B cell (primary cell): ENCODE measurements at regions of chr9 and their contacts with region 1.

Region 1: GRCh38 chr9:111975709-111976108 is 79.1 kb downstream of the UGCG start:
- DNase-seq: peak; percentile 42
- ATAC-seq: peak; percentile 60
- H3K4me3 ChIP-seq: no peak overlapping the region
- H3K4me3 Mint-ChIP-seq: no peak overlapping the region
- H3K27ac ChIP-seq: no peak overlapping the region
- H3K27ac Mint-ChIP-seq: no peak overlapping the region
- H3K4me1 ChIP-seq: peaks cover 15% of the 10 kb centered on the region in 2 donors
- H3K4me1 Mint-ChIP-seq: peaks cover 25% of the 10 kb centered on the region
- H3K27me3 ChIP-seq: no peaks in the 10 kb centered on the region
- H3K27me3 Mint-ChIP-seq: no peaks in the 10 kb centered on the region
- CTCF ChIP-seq: no peak

Region 2: DNA sequence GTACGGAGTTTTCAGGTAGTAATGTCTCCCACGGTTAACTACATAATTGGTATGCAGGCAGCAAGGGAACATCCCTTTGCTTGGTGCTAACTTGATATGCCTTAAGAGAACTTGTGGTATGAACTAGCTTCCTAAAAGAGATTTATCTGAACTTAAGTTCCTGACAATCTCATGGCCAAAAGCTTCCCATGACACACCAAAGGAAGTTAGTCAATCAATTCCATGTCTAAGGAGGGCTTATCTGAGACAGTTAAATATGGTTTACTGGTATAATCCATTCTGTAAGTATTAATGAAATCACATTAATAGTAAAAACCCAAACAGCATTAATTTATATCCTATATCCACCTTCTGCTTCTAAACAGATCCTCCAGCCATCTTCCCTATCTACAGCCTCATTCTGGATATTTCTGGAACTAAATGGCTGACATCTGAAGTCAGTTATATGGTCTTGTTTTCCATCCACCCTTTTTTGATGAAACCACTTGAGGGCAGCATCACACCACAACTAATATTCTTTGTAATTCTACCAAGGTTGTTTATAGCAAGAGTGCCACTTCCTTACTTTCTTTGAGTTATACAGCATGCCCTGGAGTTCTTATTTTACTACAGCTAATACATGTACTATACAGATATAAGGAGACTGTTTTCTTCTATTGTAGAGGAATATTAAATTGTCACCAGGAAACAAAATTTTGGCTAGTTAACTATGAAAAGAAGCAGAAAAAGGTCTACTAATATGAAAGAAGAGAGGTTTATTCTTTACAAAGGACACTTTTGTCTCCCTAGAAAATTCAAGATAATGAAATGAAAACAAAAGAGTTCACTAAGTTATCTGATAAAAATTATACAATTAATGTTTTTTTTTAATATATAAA is 215.7 kb before region 1 on chr9:
- CTCF ChIA-PET with region 1: interaction called, 17 read pairs
- POLR2A ChIA-PET with region 1: no interaction called
- intact Hi-C with region 1: loop called (anchors 5 kb)
- DNase-seq: peak; percentile 82
- ATAC-seq: peak; percentile 82
- H3K4me3 ChIP-seq: no peak overlapping the region
- H3K4me3 Mint-ChIP-seq: no peak overlapping the region
- H3K27ac ChIP-seq: no peak overlapping the region
- H3K27ac Mint-ChIP-seq: no peak overlapping the region
- H3K4me1 ChIP-seq: peaks cover 0 to 3% of the 10 kb centered on the region in 2 donors
- H3K4me1 Mint-ChIP-seq: peaks cover 4% of the 10 kb centered on the region
- H3K27me3 ChIP-seq: no peaks in the 10 kb centered on the region
- H3K27me3 Mint-ChIP-seq: no peaks in the 10 kb centered on the region
- CTCF ChIP-seq: peak; percentile 91

Region 3: DNA sequence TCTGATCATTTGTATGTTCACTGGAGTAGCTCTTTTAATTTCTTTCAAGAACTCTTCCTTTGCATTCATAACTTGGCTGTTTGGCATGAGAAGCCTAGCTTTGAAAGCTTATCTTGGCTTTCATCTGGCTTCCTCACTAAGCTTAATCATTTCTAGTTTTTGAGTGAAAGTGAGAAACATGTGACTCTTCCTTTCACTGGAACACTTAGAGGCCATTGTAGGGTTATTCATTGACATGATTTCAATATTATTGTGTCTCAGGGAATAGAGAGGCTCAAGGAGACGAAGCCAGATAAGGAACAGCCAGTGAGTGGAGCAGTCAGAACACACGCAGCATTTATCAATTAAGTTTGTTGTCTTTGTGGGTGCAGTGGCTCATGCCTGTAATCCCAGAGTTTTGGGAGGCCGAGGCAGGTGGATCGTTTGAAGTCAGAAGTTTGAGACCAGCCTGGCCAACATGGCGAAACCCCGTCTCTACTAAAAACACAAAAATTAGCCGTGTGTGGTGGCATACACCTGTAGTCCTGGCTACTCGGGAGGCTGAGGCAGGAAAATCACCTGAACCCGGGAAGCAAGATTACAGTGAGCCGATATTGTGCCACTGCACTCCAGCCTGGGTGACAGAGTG is 19.2 kb after region 1 on chr9:
- CTCF ChIA-PET with region 1: no interaction called
- POLR2A ChIA-PET with region 1: no interaction called
- intact Hi-C with region 1: no loop called
- DNase-seq: no peak
- ATAC-seq: no peak
- H3K4me3 ChIP-seq: no peak overlapping the region
- H3K4me3 Mint-ChIP-seq: no peak overlapping the region
- H3K27ac ChIP-seq: no peak overlapping the region
- H3K27ac Mint-ChIP-seq: peak overlapping the region; percentile 71
- H3K4me1 ChIP-seq: peaks cover 21 to 23% of the 10 kb centered on the region in 2 donors
- H3K4me1 Mint-ChIP-seq: peaks cover 32% of the 10 kb centered on the region
- H3K27me3 ChIP-seq: no peaks in the 10 kb centered on the region
- H3K27me3 Mint-ChIP-seq: no peaks in the 10 kb centered on the region
- CTCF ChIP-seq: no peak